IMR-90 (cell line): ENCODE measurements at regions of chr5 and their contacts with region 1.

Region 1: GRCh38 chr5:175082346-175082745 is 358.0 kb downstream of the MSX2 start:
- DNase-seq: no peak
- ATAC-seq: no peak
- H3K4me3 ChIP-seq: no peak overlapping the region
- H3K27ac ChIP-seq: no peak overlapping the region
- H3K4me1 ChIP-seq: no peaks in the 10 kb centered on the region
- H3K27me3 ChIP-seq: no peaks in the 10 kb centered on the region
- CTCF ChIP-seq: no peak
- POLR2A ChIP-seq: no peak
- RAD21 ChIP-seq: no peak

Region 2: DNA sequence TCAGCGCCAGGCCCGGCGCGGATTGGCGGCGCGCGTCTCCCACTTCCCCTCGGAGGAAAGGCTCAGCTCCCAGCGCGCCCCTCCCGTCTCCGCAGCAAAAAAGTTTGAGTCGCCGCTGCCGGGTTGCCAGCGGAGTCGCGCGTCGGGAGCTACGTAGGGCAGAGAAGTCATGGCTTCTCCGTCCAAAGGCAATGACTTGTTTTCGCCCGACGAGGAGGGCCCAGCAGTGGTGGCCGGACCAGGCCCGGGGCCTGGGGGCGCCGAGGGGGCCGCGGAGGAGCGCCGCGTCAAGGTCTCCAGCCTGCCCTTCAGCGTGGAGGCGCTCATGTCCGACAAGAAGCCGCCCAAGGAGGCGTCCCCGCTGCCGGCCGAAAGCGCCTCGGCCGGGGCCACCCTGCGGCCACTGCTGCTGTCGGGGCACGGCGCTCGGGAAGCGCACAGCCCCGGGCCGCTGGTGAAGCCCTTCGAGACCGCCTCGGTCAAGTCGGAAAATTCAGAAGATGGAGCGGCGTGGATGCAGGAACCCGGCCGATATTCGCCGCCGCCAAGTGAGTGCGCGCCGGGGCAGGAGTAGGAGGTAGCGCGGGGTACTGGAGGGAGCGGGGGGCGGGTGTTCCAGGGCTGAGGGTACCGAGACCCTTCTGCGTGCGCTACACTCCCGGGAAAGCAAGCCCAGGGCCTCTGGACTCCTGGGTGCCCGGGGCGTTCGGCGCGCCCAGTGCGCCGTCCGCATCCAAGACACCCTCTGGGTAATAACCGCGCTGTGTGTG is 357.7 kb before region 1 on chr5 and contains the start of gene MSX2:
- CTCF ChIA-PET with region 1: no interaction called
- POLR2A ChIA-PET with region 1: no interaction called
- dilution Hi-C with region 1: no loop called
- in situ Hi-C with region 1: no loop called
- intact Hi-C with region 1: no loop called
- DNase-seq: peak; percentile 86
- ATAC-seq: peak; percentile 96
- H3K4me3 ChIP-seq: peak within 1 kb of the TSS; percentile 54
- H3K27ac ChIP-seq: peak within 1 kb of the TSS; percentile 38
- H3K4me1 ChIP-seq: no peaks in the 10 kb centered on the region
- H3K27me3 ChIP-seq: peaks cover 40% of the 10 kb centered on the region
- CTCF ChIP-seq: no peak
- POLR2A ChIP-seq: peak; percentile 59
- RAD21 ChIP-seq: no peak
- total RNA-seq, gene MSX2: 1.9 and 2.2 TPM in 2 replicates

Region 3: GRCh38 chr5:175015028-175015685 is 67.2 kb before region 1 on chr5:
- CTCF ChIA-PET with region 1: no interaction called
- POLR2A ChIA-PET with region 1: no interaction called
- dilution Hi-C with region 1: no loop called
- in situ Hi-C with region 1: no loop called
- intact Hi-C with region 1: loop called (anchors 2 kb)
- DNase-seq: no peak
- ATAC-seq: no peak
- H3K4me3 ChIP-seq: no peak overlapping the region
- H3K27ac ChIP-seq: no peak overlapping the region
- H3K4me1 ChIP-seq: no peaks in the 10 kb centered on the region
- H3K27me3 ChIP-seq: no peaks in the 10 kb centered on the region
- CTCF ChIP-seq: no peak
- POLR2A ChIP-seq: no peak
- RAD21 ChIP-seq: no peak